ENCODE measurements at regions of chr10 and their contacts with region 1.

Region 1: GRCh38 chr10:103918053-103918846 is at the start of gene STN1:
- DNase-seq: peak; percentile 94 to 100 (median 98)

Region 2: DNA sequence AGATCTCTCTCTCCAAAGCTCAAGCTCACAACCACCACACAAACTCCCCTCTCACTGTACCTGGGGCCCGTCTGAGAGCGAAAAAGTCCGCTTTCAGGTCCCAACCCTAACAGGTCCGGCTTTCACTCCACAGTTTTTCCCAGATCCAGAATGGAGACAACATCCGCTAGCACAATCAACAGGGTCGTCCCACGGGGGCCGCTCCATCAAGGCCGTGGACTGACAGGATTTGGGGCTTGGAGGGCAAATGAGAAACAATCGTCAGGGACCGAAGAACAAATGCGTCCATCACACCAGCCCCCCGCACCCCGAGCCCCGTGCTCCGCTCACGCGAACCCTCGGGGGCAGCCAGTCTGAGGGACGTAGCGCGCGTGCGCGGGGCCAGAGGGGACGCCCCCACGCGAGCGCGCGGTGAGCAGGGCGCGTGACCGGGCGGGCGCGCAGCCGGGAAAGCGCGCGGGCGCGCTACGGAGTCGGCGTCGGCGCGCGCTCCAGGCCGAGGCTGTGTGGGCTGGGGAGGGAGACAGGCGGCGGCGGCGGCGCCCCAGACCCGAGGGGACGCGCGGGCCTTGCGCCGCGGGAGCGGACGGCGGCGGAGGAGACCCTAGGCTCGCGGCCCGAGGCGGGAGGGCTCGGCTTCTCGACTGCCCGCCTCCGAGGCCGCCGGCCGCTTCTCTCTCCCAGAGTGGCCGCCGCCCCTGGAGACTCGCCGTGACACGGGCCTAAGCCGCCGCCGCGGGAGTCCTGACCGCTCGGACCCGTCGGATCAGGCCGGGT is 48.6 kb after region 1 on chr10 and contains the start of gene SLK:
- intact Hi-C with region 1: loop called (anchors 5 kb)
- DNase-seq: peak; percentile 62 to 97 (median 74)

Region 3: DNA sequence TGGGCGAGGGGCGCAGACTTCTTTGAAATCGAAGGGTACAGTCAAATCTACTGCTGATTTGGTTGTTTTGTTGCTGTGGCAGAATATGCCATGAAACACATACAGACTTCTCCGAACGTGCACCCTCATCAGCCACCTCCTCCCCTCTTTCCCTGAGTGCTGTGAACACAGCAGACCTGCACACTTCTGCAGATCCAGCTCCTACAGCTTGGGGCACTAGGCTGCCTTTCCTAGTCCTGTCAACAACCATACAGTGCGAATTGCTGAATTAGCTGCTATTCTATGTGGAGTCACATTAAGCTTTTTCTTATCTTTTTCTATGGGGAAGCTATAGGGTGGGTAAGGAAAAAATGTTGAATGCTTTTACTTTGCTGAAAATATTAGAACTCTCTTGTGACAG is 109.9 kb after region 1 on chr10:
- intact Hi-C with region 1: loop called (anchors 10 kb)
- DNase-seq: peak in 8 of 10 donors; percentile 51 to 95 (median 69)

Region 4: DNA sequence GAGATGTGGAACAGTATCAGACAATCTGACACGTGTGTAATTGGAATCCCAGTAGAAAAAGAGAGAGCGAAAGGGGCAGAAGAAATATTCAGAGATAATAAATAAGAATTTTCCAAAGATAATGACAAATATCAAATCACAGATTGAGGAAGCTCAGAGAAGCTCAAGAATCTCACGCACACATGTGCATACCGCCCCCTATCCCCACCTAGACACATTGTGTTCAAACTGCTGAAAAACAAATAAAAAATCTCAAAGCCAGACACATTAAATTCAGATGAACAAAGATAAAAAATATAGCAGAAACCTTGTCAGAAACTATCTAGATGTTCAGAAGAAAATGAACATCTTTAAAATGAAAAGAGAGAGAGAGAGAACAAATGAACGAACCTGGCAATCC is 221.0 kb after region 1 on chr10:
- intact Hi-C with region 1: no loop called
- DNase-seq: no peak

Region 5: GRCh38 chr10:104242545-104242944 is 324.3 kb after region 1 on chr10:
- intact Hi-C with region 1: no loop called
- DNase-seq: no peak